ENCODE measurements at regions of chr11 and their contacts with region 1.

Region 1: DNA sequence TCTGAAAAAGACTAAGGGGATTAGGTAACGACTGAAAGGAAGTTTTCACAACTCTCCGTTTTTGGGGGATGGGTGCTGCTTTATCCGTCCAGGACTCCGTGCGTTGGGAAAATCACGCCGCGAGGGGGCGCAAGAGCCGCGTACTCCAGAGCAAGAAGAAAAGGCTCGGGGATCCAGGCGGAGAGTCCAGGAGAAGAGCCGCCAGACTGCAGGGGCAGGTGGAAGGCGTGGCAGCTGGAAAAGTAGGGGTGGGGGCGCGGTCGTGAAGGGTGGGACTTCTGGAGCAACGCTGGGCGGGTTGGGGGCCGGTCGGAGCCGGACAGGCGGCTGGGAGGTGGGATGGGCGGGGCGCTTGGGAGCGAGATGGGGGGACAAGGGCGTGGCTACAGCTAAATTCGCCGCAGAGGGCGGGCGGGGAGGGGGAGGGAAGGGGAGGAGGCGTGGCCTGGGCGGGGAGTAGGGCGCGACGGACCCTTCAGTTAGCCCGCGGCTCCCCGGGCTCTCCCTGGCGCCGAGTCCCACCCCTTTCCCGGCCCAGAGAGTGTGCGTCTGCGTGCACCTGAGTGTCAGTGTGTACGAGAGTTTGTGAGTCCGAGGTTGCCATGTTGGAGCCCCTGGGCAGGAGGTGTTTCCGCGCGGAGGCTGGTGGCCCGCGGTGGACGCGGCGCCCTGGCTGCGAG is 613 bp upstream of the ARHGEF17 start:
- DNase-seq: peak; percentile 82 to 96 (median 86)
- ATAC-seq: peak; percentile 78
- H3K4me3 ChIP-seq: peak overlapping the region; percentile 70
- H3K4me3 Mint-ChIP-seq: peak overlapping the region; percentile 92
- H3K27ac ChIP-seq: no peak overlapping the region
- H3K27ac Mint-ChIP-seq: no peak overlapping the region
- H3K4me1 ChIP-seq: peaks cover 24% of the 10 kb centered on the region
- H3K4me1 Mint-ChIP-seq: peaks cover 10% of the 10 kb centered on the region
- H3K27me3 ChIP-seq: peaks cover 23% of the 10 kb centered on the region in 2 experiments
- H3K27me3 Mint-ChIP-seq: peaks cover 41% of the 10 kb centered on the region
- CTCF ChIP-seq: peak; percentile 65

Region 2: GRCh38 chr11:73393479-73394380 is 86.3 kb after region 1 on chr11:
- CTCF ChIA-PET with region 1: no interaction called
- POLR2A ChIA-PET with region 1: no interaction called
- intact Hi-C with region 1: loop called (anchors 5 to 10 kb)
- DNase-seq: peak; percentile 52 to 81 (median 62)
- ATAC-seq: peak; percentile 77
- H3K4me3 ChIP-seq: no peak overlapping the region
- H3K4me3 Mint-ChIP-seq: peak overlapping the region; percentile 30
- H3K27ac ChIP-seq: no peak overlapping the region
- H3K27ac Mint-ChIP-seq: peak overlapping the region; percentile 73
- H3K4me1 ChIP-seq: peaks cover 7% of the 10 kb centered on the region
- H3K4me1 Mint-ChIP-seq: peaks cover 4% of the 10 kb centered on the region
- H3K27me3 ChIP-seq: no peaks in the 10 kb centered on the region
- H3K27me3 Mint-ChIP-seq: no peaks in the 10 kb centered on the region
- CTCF ChIP-seq: peak; percentile 77

Region 3: DNA sequence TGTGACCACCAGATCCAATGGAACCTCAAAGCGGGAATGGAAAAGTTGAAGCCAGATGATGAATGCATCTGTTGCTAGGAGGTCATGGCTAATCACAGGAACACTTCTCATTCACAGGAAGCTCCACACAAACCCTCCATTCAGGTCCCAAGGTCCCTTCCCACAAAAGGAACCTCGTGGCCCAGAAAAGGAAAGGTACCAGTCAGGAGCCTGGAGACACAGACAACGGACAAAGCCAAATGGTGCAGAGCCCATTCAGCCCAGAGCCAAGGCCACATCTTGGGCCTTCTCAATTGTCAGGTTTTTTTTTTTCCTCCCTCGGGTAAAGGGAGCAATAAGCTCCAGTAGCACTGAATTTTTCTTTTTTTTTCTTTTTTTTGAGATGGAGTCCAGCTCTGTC is 203.4 kb after region 1 on chr11:
- CTCF ChIA-PET with region 1: no interaction called
- POLR2A ChIA-PET with region 1: no interaction called
- intact Hi-C with region 1: no loop called
- DNase-seq: no peak
- ATAC-seq: no peak
- H3K4me3 ChIP-seq: no peak overlapping the region
- H3K4me3 Mint-ChIP-seq: no peak overlapping the region
- H3K27ac ChIP-seq: no peak overlapping the region
- H3K27ac Mint-ChIP-seq: no peak overlapping the region
- H3K4me1 ChIP-seq: no peaks in the 10 kb centered on the region
- H3K4me1 Mint-ChIP-seq: peaks cover 6% of the 10 kb centered on the region
- H3K27me3 ChIP-seq: no peaks in the 10 kb centered on the region
- H3K27me3 Mint-ChIP-seq: no peaks in the 10 kb centered on the region
- CTCF ChIP-seq: no peak